Heart right ventricle (tissue), 16 donors: ENCODE measurements at regions of chr5 and their contacts with region 1.

Region 1: GRCh38 chr5:139745800-139746690 is 49.6 kb upstream of the PSD2 start:
- DNase-seq: peak; percentile 54 to 65
- ATAC-seq: peak; percentile 51 to 87 (median 76)
- H3K4me3 ChIP-seq: peak overlapping the region; percentile 29 to 62 (median 49)
- H3K27ac ChIP-seq: peak overlapping the region in 3 of 10 donors; percentile 15 to 64 (median 36)
- H3K4me1 ChIP-seq: peaks cover 8 to 42% (median 35%) of the 10 kb centered on the region in 9 donors
- H3K27me3 ChIP-seq: peaks cover 6 to 64% (median 30%) of the 10 kb centered on the region in 7 donors
- CTCF ChIP-seq: no peak

Region 2: DNA sequence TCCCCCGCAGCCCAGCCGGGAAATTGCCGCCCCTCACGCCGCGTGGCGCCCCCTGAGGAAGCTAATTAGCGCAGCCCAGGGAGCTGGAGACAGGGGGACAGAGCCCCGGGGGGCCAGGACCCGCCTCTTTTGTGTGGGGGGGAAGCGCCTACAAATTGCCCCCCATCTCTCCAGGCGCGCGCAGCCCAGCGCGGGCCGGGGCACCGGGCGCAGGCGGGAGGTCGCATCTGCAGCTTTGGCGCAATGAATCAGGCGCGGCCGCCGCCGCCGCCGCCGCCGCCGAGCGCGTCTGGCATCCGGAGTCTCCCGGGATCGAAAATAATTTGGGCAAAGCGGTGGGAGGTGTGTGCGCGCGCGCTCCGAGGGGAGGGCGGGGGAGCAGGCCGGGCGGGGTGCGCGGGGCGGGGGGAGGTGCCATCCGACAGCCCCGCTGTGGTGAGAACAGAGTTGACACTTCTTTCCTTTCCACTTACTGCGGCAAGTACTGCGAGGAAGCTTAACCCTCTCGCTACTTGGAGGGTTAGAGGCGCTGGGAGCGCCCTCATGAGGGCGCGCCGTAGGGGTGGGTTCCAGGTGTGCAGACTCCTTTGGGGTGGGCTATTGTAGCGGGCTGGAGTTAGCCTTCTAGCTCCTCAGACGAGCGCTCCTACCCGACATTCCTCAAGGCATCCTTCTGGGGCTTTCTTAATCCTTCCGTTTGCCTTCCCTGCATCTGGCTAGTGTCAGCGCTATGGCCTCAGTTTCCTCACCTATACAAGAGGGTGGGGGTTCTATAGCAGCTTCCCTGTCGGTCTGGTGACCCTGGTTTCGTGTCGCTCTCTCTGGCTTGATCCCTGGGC is 34.8 kb before region 1 on chr5:
- intact Hi-C with region 1: loop called in 1 of 10 experiments (anchors 5 kb)
- DNase-seq: peak in 1 of 2 donors; percentile 45
- ATAC-seq: peak in 7 of 8 donors; percentile 2 to 21 (median 6)
- H3K4me3 ChIP-seq: peak overlapping the region; percentile 18 to 65 (median 60)
- H3K27ac ChIP-seq: peak overlapping the region in 7 of 10 donors; percentile 11 to 88 (median 85)
- H3K4me1 ChIP-seq: peaks cover 12 to 40% (median 36%) of the 10 kb centered on the region in 9 donors
- H3K27me3 ChIP-seq: peaks cover 0 to 44% (median 0%) of the 10 kb centered on the region in 7 donors
- CTCF ChIP-seq: peak in 2 of 9 donors; percentile 10 to 24